ENCODE measurements at regions of chr17 and their contacts with region 1.

Region 1: DNA sequence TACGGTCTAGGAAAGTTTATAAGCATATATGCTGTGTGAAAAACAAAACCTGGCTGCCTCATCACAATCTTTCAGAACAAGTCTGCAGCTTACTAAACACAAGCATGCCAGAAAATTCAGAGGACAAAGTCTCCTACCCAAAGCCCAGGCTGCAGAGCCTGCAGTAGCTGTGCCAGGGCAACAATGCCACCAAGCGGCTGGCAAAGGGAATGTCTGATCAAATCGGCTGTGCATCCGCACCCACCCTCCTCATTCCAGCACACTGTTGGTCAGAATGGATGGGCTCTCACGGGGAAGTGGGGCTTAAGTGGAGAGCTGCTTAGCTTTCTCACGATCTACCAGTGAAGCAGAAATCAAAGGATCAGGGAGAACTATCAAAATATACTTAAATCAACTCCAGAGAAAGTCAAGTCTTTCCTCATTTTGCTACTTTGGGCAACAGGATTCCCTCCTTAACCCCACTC is 73.5 kb downstream of the CYTH1 start:
- DNase-seq: peak; percentile 92 to 99
- ATAC-seq: peak; percentile 97 to 98
- H3K4me3 ChIP-seq: no peak overlapping the region
- H3K27ac ChIP-seq: peak overlapping the region; percentile 78 to 88
- H3K4me1 ChIP-seq: peaks cover 48% of the 10 kb centered on the region
- CTCF ChIP-seq: peak; percentile 99
- EP300 ChIP-seq: no peak; a peak in 1 of 5 replicates
- POLR2A ChIP-seq: no peak
- RAD21 ChIP-seq: peak; percentile 100

Region 2: GRCh38 chr17:78058001-78058400 is 650.5 kb before region 1 on chr17:
- CTCF ChIA-PET with region 1: no interaction called
- POLR2A ChIA-PET with region 1: no interaction called
- DNase-seq: no peak
- ATAC-seq: no peak
- H3K4me3 ChIP-seq: no peak overlapping the region
- H3K27ac ChIP-seq: no peak overlapping the region
- H3K4me1 ChIP-seq: no peaks in the 10 kb centered on the region
- CTCF ChIP-seq: no peak
- EP300 ChIP-seq: no peak
- POLR2A ChIP-seq: no peak
- RAD21 ChIP-seq: no peak

Region 3: DNA sequence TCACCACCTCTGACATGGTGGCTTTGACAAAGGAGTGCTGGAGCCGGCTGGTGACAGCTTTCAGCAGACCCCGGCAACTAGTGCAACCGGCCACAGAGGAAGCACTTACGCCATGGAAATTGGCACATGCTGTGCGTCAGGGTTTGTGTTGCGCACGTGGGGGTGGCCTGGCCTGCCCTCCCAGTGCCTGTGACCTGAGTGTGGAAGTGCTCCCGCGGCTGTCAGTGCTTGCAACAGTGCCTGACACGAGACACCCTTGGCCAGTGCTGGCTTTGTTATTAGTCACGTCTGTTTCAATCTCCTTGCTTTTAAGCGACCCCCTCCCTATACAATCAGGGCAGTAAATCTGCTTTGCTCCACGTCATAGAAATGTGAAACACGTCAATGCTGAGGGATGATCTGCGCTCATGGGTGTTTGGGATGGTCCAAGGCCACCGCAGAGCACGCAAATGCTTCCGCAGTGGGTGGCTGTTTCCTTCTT is 265.9 kb before region 1 on chr17:
- CTCF ChIA-PET with region 1: interaction called, 10 read pairs
- POLR2A ChIA-PET with region 1: no interaction called
- DNase-seq: no peak
- ATAC-seq: no peak
- H3K4me3 ChIP-seq: no peak overlapping the region
- H3K27ac ChIP-seq: no peak overlapping the region
- H3K4me1 ChIP-seq: 0 out of 3 replicates have a peak, but pooled peaks cover 3% of the 10 kb centered on the region
- CTCF ChIP-seq: no peak
- EP300 ChIP-seq: no peak
- POLR2A ChIP-seq: no peak
- RAD21 ChIP-seq: no peak

Region 4: GRCh38 chr17:78532922-78533640 is 175.5 kb before region 1 on chr17:
- CTCF ChIA-PET with region 1: interaction called, 51 read pairs
- POLR2A ChIA-PET with region 1: interaction called, 3 read pairs
- DNase-seq: peak; percentile 88 to 90
- ATAC-seq: peak; percentile 61 to 74; a peak in 5 of 6 replicates
- H3K4me3 ChIP-seq: no peak overlapping the region
- H3K27ac ChIP-seq: peak overlapping the region; percentile 54 to 81; a peak in 5 of 6 replicates
- H3K4me1 ChIP-seq: peaks cover 49% of the 10 kb centered on the region
- CTCF ChIP-seq: no peak
- EP300 ChIP-seq: peak in 1 of 2 experiments; percentile 33; a peak in 1 of 5 replicates
- POLR2A ChIP-seq: no peak
- RAD21 ChIP-seq: no peak

Region 5: DNA sequence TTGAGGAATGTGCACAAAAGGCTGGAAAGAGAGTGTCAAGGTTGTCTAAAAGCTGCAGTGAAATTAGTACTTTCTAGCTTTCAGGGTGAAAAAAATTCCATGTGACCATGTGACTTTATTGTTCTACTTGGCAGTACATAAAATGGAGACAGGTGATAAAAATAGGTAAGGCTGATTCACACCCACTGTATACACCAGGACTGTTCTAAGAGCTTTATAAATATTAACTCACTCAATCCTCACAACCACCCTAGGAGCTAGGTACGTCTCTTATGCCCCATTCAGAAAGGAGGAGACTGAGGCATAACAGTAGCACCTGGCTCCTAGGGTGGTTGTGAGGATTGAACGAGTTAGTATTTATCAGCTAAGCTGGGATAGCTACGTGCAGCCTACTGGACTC is 103.1 kb before region 1 on chr17:
- CTCF ChIA-PET with region 1: interaction called, 33 read pairs
- POLR2A ChIA-PET with region 1: no interaction called
- DNase-seq: no peak
- ATAC-seq: no peak
- H3K4me3 ChIP-seq: no peak overlapping the region
- H3K27ac ChIP-seq: peak overlapping the region in 1 of 2 experiments; percentile 94; a peak in 3 of 6 replicates
- H3K4me1 ChIP-seq: peaks cover 37% of the 10 kb centered on the region
- CTCF ChIP-seq: no peak
- EP300 ChIP-seq: no peak
- POLR2A ChIP-seq: no peak
- RAD21 ChIP-seq: no peak

Region 6: GRCh38 chr17:78665952-78666920 is 42.3 kb before region 1 on chr17:
- CTCF ChIA-PET with region 1: interaction called, 19 read pairs
- POLR2A ChIA-PET with region 1: no interaction called
- DNase-seq: no peak
- ATAC-seq: no peak; a peak in 1 of 6 replicates
- H3K4me3 ChIP-seq: no peak overlapping the region
- H3K27ac ChIP-seq: peak overlapping the region; percentile 34 to 71
- H3K4me1 ChIP-seq: peaks cover 19% of the 10 kb centered on the region
- CTCF ChIP-seq: no peak
- EP300 ChIP-seq: no peak
- POLR2A ChIP-seq: no peak
- RAD21 ChIP-seq: no peak

Region 7: GRCh38 chr17:78736526-78737079 is 28.1 kb after region 1 on chr17:
- CTCF ChIA-PET with region 1: interaction called, 45 read pairs
- POLR2A ChIA-PET with region 1: interaction called, 4 read pairs
- DNase-seq: peak; percentile 89 to 92
- ATAC-seq: peak; percentile 97 to 99
- H3K4me3 ChIP-seq: peak overlapping the region; percentile 61
- H3K27ac ChIP-seq: peak overlapping the region; percentile 72 to 85
- H3K4me1 ChIP-seq: peaks cover 32% of the 10 kb centered on the region
- CTCF ChIP-seq: no peak
- EP300 ChIP-seq: no peak
- POLR2A ChIP-seq: peak; percentile 38
- RAD21 ChIP-seq: no peak

Region 8: DNA sequence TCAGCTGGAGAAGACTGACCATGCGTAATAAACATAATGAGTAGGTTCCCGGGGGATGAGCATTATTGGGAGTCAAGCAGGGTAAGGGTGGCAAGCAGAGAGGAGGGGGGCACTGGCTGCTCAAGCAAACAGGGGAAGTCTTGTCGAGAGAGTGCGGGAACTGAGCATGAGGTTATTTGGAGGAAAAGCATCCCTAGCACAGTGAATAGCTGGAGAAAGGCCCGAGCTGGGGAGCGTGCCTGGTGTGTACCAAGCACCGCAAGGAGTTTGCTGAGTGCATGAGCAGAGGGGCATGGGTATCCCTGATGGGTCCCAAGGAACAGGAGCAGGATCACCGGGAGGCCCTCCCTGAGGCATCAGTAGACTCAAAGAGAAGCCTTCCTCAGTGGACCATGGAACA is 56.3 kb after region 1 on chr17:
- CTCF ChIA-PET with region 1: no interaction called
- POLR2A ChIA-PET with region 1: no interaction called
- DNase-seq: no peak
- ATAC-seq: no peak
- H3K4me3 ChIP-seq: no peak overlapping the region
- H3K27ac ChIP-seq: no peak overlapping the region
- H3K4me1 ChIP-seq: 0 out of 3 replicates have a peak, but pooled peaks cover 3% of the 10 kb centered on the region
- CTCF ChIP-seq: no peak
- EP300 ChIP-seq: no peak
- POLR2A ChIP-seq: no peak
- RAD21 ChIP-seq: no peak

Region 9: DNA sequence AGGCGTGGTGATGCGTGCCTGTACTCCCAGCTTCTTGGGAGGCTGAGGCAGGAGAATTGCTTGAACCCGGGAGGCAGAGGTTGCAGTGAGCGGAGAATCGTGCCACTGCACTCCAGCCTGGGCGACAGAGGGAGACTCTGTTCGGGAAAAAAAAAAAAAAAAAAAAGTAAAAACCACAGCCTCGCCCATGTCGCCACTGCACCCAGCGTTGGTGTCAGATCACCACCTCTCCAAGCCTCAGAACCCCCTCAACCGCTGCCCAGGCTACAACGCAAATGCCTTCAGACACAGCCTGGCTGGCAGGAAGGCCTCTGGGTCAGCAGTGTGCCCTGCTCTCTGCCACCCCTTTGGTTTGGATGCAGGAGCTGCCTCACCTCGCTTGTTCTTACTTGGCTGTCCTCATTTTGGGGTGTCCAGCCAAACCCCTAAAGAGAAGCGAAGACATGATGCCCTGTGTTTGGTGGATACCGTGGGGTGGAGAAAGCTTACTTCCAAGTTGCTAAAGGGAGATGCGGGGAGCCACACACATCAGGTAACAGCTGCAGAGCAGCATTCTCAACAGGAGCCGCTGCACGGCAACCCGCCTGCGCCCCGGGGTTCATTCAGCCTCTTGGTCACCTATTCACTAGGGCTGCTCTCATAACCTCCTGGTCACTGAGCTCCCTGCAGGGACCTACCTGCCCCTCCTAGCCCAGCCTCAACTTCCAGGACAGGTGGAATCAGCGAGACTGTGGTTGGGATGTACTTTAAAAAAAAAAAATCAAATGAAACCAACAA is 86.5 kb after region 1 on chr17:
- CTCF ChIA-PET with region 1: no interaction called
- POLR2A ChIA-PET with region 1: no interaction called
- DNase-seq: no peak
- ATAC-seq: no peak
- H3K4me3 ChIP-seq: no peak overlapping the region
- H3K27ac ChIP-seq: no peak overlapping the region
- H3K4me1 ChIP-seq: peaks cover 3% of the 10 kb centered on the region; the same call in 1 of the 3 replicates
- CTCF ChIP-seq: no peak
- EP300 ChIP-seq: no peak
- POLR2A ChIP-seq: no peak
- RAD21 ChIP-seq: no peak

Region 10: DNA sequence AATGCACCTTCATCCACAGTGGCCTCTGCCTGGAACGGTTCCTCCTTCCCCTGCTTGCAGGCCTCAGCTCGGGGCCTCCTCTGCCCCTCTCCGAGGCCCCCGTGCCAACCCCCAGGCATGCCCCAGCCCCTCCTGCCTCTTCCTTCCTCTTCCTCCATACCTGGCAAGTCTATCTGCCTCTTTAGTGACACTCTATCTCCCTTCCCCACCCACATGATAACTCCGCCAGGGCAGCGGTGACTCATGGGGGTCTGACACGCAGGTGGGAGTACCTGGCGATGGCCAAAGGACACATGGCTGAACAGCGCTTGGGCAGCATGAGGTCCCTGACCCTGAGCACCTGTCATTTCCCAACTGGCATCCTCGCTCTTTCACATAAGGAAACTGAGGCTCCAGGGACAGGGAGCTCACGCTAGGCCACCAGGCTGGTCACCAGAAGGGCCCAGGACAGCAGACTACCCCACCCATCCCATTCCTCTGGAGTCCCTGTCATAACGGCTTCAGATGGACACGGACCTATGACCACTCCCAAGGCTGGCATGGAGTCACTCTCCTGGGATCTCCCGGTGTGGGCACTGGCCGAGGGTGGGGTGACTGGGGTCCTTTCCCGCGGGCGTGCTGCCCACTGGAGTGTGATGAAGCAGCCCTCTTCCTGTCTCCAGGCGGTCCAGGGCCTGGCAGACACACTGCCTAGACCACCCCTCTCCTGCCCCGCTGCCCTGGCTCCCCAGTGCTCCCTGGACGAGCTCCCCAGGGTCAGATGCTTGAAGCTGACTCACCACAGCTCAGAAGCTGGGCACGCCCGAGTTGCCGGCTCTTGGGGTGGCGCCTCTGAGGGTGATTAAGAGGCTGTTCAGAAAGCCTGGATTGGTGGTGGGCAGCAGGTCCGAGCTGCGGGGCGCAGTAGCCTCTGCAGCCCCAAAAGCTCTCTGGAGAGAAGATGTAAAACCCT is 466.6 kb after region 1 on chr17:
- CTCF ChIA-PET with region 1: no interaction called
- POLR2A ChIA-PET with region 1: no interaction called
- DNase-seq: peak in 1 of 2 experiments; percentile 24
- ATAC-seq: peak; percentile 44 to 49; a peak in 4 of 6 replicates
- H3K4me3 ChIP-seq: no peak overlapping the region
- H3K27ac ChIP-seq: peak overlapping the region in 1 of 2 experiments; percentile 28; a peak in 1 of 6 replicates
- H3K4me1 ChIP-seq: peaks cover 11% of the 10 kb centered on the region; the same call in 1 of the 3 replicates
- CTCF ChIP-seq: no peak
- EP300 ChIP-seq: no peak
- POLR2A ChIP-seq: no peak
- RAD21 ChIP-seq: no peak

Measured in A549 (cell line).